ENCODE measurements at regions of chr10 and their contacts with region 1.

Region 1: GRCh38 chr10:101141616-101142532 is 10.8 kb downstream of the TLX1 start:
- DNase-seq: peak; percentile 88
- ATAC-seq: peak; percentile 88
- H3K4me3 ChIP-seq: no peak overlapping the region
- H3K4me3 Mint-ChIP-seq: no peak overlapping the region
- H3K27ac ChIP-seq: no peak overlapping the region
- H3K27ac Mint-ChIP-seq: no peak overlapping the region
- H3K4me1 ChIP-seq: peaks cover 34 to 46% of the 10 kb centered on the region in 2 donors
- H3K4me1 Mint-ChIP-seq: peaks cover 24% of the 10 kb centered on the region
- H3K27me3 ChIP-seq: peaks cover 0 to 92% (median 68%) of the 10 kb centered on the region in 4 experiments
- H3K27me3 Mint-ChIP-seq: peaks cover 73% of the 10 kb centered on the region
- CTCF ChIP-seq: peak; percentile 98

Region 2: DNA sequence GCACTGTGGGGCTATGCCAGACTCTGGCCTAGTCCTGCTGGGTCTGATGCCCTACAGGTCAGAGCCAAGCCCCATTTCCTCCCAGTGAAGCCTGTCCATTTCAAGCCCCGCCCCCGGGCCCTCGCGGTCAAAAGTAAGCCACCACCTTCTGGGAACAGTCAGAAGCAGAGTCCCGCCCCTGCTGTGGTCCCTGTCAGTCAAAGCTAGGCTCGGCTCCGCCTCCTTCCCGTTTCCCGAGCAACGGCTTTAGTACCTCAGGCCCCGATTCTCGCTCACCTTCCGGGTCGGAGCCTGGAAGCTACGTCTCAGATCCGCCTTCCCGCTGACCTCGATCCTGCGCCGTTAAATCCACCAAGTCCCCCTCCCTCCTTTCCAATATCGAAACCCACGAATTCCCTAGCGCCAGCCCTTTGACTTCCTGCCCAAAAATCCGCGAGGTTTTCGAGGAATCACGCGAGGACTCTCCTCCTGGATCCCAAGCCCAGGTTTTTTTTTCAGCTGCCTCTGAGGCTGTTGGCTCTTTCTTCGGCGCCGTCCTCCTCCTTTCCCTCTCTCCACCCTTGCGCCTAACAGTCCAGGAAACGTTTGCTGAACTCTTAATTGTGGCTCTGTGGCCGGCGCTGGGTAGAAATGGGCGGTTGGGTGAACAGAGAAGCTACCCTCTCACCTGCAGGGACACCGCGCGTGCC is 99.1 kb before region 1 on chr10:
- CTCF ChIA-PET with region 1: interaction called, 127 read pairs
- POLR2A ChIA-PET with region 1: no interaction called
- intact Hi-C with region 1: loop called (anchors 1 kb)
- DNase-seq: peak; percentile 88
- ATAC-seq: peak; percentile 90
- H3K4me3 ChIP-seq: peak overlapping the region; percentile 50 to 76 (median 68)
- H3K4me3 Mint-ChIP-seq: peak overlapping the region; percentile 100
- H3K27ac ChIP-seq: peak overlapping the region in 1 of 2 donors; percentile 76
- H3K27ac Mint-ChIP-seq: peak overlapping the region; percentile 90
- H3K4me1 ChIP-seq: peaks cover 6 to 15% of the 10 kb centered on the region in 2 donors
- H3K4me1 Mint-ChIP-seq: peaks cover 17% of the 10 kb centered on the region
- H3K27me3 ChIP-seq: peaks cover 0 to 22% (median 6%) of the 10 kb centered on the region in 4 experiments
- H3K27me3 Mint-ChIP-seq: peaks cover 19% of the 10 kb centered on the region
- CTCF ChIP-seq: no peak

Region 3: GRCh38 chr10:101067356-101068083 is 74.4 kb before region 1 on chr10:
- CTCF ChIA-PET with region 1: interaction called, 37 read pairs
- POLR2A ChIA-PET with region 1: no interaction called
- intact Hi-C with region 1: no loop called
- DNase-seq: peak; percentile 83
- ATAC-seq: peak; percentile 63
- H3K4me3 ChIP-seq: peak overlapping the region; percentile 28 to 80 (median 71)
- H3K4me3 Mint-ChIP-seq: peak overlapping the region; percentile 98
- H3K27ac ChIP-seq: no peak overlapping the region
- H3K27ac Mint-ChIP-seq: peak overlapping the region; percentile 66
- H3K4me1 ChIP-seq: peaks cover 50 to 53% of the 10 kb centered on the region in 2 donors
- H3K4me1 Mint-ChIP-seq: peaks cover 52% of the 10 kb centered on the region
- H3K27me3 ChIP-seq: peaks cover 0 to 49% (median 21%) of the 10 kb centered on the region in 4 experiments
- H3K27me3 Mint-ChIP-seq: peaks cover 25% of the 10 kb centered on the region
- CTCF ChIP-seq: peak; percentile 95

Region 4: GRCh38 chr10:101095542-101096213 is 46.2 kb before region 1 on chr10:
- CTCF ChIA-PET with region 1: interaction called, 347 read pairs
- POLR2A ChIA-PET with region 1: interaction called, 3 read pairs
- intact Hi-C with region 1: loop called (anchors 1 kb)
- DNase-seq: peak; percentile 76
- ATAC-seq: peak; percentile 92
- H3K4me3 ChIP-seq: no peak overlapping the region
- H3K4me3 Mint-ChIP-seq: no peak overlapping the region
- H3K27ac ChIP-seq: no peak overlapping the region
- H3K27ac Mint-ChIP-seq: no peak overlapping the region
- H3K4me1 ChIP-seq: no peaks in the 10 kb centered on the region
- H3K4me1 Mint-ChIP-seq: peaks cover 2% of the 10 kb centered on the region
- H3K27me3 ChIP-seq: peaks cover 0 to 83% (median 10%) of the 10 kb centered on the region in 4 experiments
- H3K27me3 Mint-ChIP-seq: peaks cover 58% of the 10 kb centered on the region
- CTCF ChIP-seq: peak; percentile 87

Region 5: DNA sequence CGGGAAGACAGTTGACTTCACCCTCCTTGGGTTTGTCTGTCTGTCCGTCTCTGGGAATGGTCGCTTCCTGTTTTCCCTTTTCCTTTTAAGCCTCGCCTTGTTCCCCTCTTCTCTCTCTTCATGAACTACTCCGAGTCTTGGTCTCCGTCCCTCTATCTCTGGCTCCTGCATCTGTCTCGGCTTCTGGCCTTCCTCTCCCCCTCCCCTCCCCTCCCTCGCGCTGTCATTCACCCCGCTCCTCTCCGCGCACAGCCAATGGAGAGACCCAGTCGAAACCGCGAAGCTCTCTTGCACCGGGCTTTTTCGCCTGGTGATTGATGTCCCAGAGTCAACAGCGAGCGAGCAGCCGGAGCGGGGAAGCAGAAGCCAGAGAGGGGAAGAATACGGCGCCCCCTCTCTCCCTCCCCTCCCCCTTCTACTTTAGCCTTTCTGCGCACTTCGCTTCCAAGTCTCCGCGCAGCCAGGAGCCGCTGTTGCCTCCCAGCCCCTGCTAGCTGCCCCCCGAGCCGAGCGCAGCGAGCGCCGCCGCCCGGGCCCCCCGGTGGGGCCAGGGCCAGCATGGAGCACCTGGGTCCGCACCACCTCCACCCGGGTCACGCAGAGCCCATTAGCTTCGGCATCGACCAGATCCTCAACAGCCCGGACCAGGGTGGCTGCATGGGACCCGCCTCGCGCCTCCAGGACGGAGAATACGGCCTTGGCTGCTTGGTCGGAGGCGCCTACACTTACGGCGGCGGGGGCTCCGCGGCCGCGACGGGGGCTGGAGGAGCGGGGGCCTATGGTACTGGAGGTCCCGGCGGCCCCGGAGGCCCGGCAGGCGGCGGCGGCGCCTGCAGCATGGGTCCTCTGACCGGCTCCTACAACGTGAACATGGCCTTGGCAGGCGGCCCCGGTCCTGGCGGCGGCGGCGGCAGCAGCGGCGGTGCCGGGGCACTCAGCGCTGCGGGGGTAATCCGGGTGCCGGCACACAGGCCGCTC is 10.6 kb before region 1 on chr10 and contains the start of gene TLX1:
- CTCF ChIA-PET with region 1: interaction called, 18 read pairs
- POLR2A ChIA-PET with region 1: interaction called, 3 read pairs
- intact Hi-C with region 1: no loop called
- DNase-seq: peak; percentile 51
- ATAC-seq: peak; percentile 33
- H3K4me3 ChIP-seq: peak within 1 kb of the TSS in 3 of 5 experiments; percentile 15 to 27 (median 25)
- H3K4me3 Mint-ChIP-seq: peak within 1 kb of the TSS; percentile 64
- H3K27ac ChIP-seq: no peak within 1 kb of the TSS
- H3K27ac Mint-ChIP-seq: no peak within 1 kb of the TSS
- H3K4me1 ChIP-seq: peaks cover 48 to 65% of the 10 kb centered on the region in 2 donors
- H3K4me1 Mint-ChIP-seq: peaks cover 35% of the 10 kb centered on the region
- H3K27me3 ChIP-seq: peaks cover 0 to 93% (median 75%) of the 10 kb centered on the region in 4 experiments
- H3K27me3 Mint-ChIP-seq: peaks cover 72% of the 10 kb centered on the region
- CTCF ChIP-seq: no peak
- total RNA-seq, gene TLX1: not detected in 2 replicates

Region 6: GRCh38 chr10:101258179-101258885 is 116.5 kb after region 1 on chr10:
- CTCF ChIA-PET with region 1: no interaction called
- POLR2A ChIA-PET with region 1: no interaction called
- intact Hi-C with region 1: no loop called
- DNase-seq: no peak
- ATAC-seq: no peak
- H3K4me3 ChIP-seq: no peak overlapping the region
- H3K4me3 Mint-ChIP-seq: no peak overlapping the region
- H3K27ac ChIP-seq: no peak overlapping the region
- H3K27ac Mint-ChIP-seq: no peak overlapping the region
- H3K4me1 ChIP-seq: no peaks in the 10 kb centered on the region
- H3K4me1 Mint-ChIP-seq: no peaks in the 10 kb centered on the region
- H3K27me3 ChIP-seq: peaks cover 0 to 16% (median 5%) of the 10 kb centered on the region in 4 experiments
- H3K27me3 Mint-ChIP-seq: peaks cover 56% of the 10 kb centered on the region
- CTCF ChIP-seq: no peak

Measured in B cell (primary cell).